ENCODE measurements at regions of chr16 and their contacts with region 1.

Region 1: GRCh38 chr16:24041826-24042631 is 206.2 kb downstream of the PRKCB start:
- DNase-seq: peak; percentile 92
- ATAC-seq: peak; percentile 97
- H3K4me3 Mint-ChIP-seq: no peak overlapping the region
- H3K27ac Mint-ChIP-seq: no peak overlapping the region
- H3K4me1 Mint-ChIP-seq: peaks cover 4% of the 10 kb centered on the region
- H3K27me3 Mint-ChIP-seq: no peaks in the 10 kb centered on the region
- CTCF ChIP-seq: peak; percentile 86

Region 2: DNA sequence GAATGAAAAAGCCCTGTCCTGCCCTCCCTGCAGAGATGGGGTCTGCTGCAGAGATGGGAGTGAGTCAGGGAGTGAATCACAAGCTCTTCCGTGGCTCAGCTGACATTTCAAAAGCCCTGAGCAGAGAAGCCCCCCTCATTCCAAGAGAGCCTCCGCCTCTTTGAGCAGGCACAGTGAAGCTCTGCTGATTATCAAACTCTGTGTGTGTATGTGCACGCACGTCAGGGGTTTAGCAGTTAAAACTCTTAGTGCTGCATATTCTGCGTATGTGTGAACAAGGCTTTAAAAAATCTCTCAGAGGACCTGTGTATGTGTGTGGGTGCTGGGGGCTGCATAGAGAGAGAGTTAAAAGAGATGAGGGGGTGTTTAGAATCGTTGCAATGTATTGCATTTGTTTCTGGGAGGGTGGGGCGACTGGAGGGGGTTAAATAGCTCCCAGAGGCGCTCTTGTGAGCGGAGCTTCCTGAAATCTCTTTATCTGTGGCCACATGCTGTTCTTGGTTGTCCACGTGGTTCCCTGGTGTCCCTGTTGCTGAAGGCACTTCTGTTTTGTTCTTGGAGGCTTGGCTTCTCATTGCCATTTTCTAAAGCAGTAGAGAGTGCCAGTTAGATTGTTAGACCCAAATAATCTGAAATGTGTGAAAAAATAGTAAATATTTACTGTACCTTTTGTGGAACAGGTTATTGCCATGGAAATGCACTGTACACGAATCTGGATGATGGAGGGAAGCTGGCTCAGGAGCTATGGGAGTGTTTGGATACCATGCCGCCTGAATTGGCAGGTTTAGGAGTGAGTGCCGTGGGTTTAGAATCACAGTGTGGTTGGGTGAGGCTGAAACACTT is 89.7 kb before region 1 on chr16:
- CTCF ChIA-PET with region 1: no interaction called
- POLR2A ChIA-PET with region 1: no interaction called
- intact Hi-C with region 1: no loop called
- DNase-seq: peak; percentile 86
- ATAC-seq: peak; percentile 82
- H3K4me3 Mint-ChIP-seq: peak overlapping the region; percentile 70
- H3K27ac Mint-ChIP-seq: peak overlapping the region; percentile 92
- H3K4me1 Mint-ChIP-seq: peaks cover 88% of the 10 kb centered on the region
- H3K27me3 Mint-ChIP-seq: no peaks in the 10 kb centered on the region
- CTCF ChIP-seq: no peak

Region 3: DNA sequence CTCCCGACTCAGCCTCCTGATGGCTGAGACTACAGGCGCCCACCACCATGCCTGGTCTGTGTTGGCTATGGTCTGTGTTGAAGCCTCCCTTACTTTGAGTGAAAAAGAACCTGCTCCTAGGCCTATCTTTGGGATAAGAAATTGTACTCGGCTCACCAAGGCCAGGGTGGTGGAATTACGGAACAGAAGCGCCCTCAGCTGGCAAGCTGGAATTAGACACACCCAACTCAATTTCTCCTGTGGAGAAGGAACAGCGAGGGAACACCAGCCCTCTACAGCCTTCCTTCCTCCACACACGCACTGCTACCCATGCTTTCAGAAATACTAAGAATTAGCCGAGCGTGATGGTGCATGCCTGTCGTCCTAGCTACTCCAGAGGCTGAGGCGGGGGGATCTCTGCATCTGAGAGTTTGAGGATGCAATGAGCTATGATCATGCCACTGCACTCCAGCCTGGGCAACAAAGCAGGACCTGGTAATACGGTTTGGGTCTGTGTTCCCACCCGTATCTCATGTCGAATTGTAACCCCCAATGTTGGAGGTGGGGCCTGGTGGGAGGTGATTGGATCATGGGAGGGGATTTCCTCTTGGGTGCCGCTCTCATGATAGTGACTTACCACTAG is 457.3 kb after region 1 on chr16:
- CTCF ChIA-PET with region 1: interaction called, 36 read pairs
- POLR2A ChIA-PET with region 1: no interaction called
- intact Hi-C with region 1: loop called (anchors 10 kb)
- DNase-seq: peak; percentile 35
- ATAC-seq: no peak
- H3K4me3 Mint-ChIP-seq: no peak overlapping the region
- H3K27ac Mint-ChIP-seq: no peak overlapping the region
- H3K4me1 Mint-ChIP-seq: no peaks in the 10 kb centered on the region
- H3K27me3 Mint-ChIP-seq: peaks cover 6% of the 10 kb centered on the region
- CTCF ChIP-seq: no peak